Activated CD8-positive, alpha-beta T cell treated with anti-CD3 and anti-CD28 coated beads for 36 hours (primary cell): ENCODE measurements at regions of chr21 and their contacts with region 1.

Region 1: DNA sequence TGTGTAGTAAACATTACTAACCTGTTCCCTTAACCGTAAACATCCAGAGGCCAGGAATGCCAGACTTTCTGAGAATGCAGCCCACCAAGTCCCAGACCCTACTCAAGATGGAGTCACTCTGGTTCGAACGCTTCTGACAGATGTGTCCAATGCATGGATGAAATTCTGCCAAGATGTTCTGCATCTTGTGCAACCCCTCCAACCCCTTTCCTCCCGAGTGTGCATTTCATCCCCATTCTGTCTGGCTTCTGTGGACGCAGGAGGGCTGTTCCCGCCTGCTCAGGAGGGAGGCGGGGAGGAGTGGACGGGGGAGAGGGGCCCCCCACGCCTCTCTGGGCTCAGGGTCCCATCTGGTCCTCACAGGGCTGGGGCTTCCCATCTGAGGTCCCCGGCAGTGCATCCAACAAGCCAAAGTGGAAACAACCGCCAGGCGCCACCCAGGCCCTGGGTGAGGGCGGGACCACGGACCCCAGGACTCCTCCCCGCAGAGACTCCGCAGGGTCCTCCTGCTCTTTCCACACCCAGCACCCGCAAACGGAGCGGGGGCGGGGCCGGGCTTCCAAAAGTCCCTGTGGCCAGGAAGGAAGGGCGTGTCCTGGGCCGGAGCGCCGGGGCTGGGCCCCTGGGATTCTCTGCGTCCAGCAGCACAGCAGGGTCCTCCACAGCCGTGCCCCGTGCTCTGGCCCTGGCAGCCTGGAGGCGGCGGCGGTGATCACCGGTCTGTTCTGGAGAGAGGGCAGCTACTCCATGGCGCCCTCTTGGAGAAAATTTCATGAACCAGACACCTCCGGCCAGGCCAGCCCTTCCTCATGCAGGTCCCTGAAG is 27.7 kb upstream of the SUMO3 start:
- DNase-seq: peak; percentile 75
- ATAC-seq: peak; percentile 87
- H3K4me3 Mint-ChIP-seq: peak overlapping the region; percentile 71
- H3K27ac Mint-ChIP-seq: peak overlapping the region; percentile 53
- H3K4me1 Mint-ChIP-seq: peaks cover 19% of the 10 kb centered on the region
- H3K27me3 Mint-ChIP-seq: no peaks in the 10 kb centered on the region
- CTCF ChIP-seq: peak; percentile 75

Region 2: GRCh38 chr21:44873356-44874239 is 28.0 kb after region 1 on chr21 and contains the start of gene PTTG1IP:
- CTCF ChIA-PET with region 1: interaction called, 12 read pairs
- POLR2A ChIA-PET with region 1: no interaction called
- intact Hi-C with region 1: no loop called
- DNase-seq: peak; percentile 99
- ATAC-seq: peak; percentile 89
- H3K4me3 Mint-ChIP-seq: peak within 1 kb of the TSS; percentile 84
- H3K27ac Mint-ChIP-seq: peak within 1 kb of the TSS; percentile 83
- H3K4me1 Mint-ChIP-seq: peaks cover 40% of the 10 kb centered on the region
- H3K27me3 Mint-ChIP-seq: no peaks in the 10 kb centered on the region
- CTCF ChIP-seq: no peak
- total RNA-seq, gene PTTG1IP: 60.7 to 61.8 TPM

Region 3: DNA sequence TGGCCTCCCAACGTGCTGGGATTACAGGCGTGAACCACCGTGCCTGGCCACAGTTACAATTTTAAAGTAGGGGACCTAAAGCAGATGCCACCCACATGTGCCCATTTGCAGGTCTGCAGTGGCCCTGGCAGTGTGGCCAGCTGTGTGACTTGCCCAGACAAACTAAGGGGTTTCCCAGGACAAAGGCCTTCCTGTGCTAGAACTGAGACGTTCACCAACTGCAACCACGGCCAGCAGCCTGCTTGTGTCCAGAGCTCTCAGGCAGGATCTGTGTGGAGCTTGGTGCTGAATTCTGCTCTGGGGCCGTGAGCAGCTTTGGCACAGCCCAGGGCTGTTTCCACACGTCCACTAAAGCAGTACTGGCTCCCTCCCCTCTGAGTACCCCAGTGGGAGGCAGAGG is 38.5 kb after region 1 on chr21:
- CTCF ChIA-PET with region 1: no interaction called
- POLR2A ChIA-PET with region 1: no interaction called
- intact Hi-C with region 1: no loop called
- DNase-seq: no peak
- ATAC-seq: peak; percentile 7
- H3K4me3 Mint-ChIP-seq: no peak overlapping the region
- H3K27ac Mint-ChIP-seq: peak overlapping the region; percentile 16
- H3K4me1 Mint-ChIP-seq: peaks cover 21% of the 10 kb centered on the region
- H3K27me3 Mint-ChIP-seq: no peaks in the 10 kb centered on the region
- CTCF ChIP-seq: no peak

Region 4: DNA sequence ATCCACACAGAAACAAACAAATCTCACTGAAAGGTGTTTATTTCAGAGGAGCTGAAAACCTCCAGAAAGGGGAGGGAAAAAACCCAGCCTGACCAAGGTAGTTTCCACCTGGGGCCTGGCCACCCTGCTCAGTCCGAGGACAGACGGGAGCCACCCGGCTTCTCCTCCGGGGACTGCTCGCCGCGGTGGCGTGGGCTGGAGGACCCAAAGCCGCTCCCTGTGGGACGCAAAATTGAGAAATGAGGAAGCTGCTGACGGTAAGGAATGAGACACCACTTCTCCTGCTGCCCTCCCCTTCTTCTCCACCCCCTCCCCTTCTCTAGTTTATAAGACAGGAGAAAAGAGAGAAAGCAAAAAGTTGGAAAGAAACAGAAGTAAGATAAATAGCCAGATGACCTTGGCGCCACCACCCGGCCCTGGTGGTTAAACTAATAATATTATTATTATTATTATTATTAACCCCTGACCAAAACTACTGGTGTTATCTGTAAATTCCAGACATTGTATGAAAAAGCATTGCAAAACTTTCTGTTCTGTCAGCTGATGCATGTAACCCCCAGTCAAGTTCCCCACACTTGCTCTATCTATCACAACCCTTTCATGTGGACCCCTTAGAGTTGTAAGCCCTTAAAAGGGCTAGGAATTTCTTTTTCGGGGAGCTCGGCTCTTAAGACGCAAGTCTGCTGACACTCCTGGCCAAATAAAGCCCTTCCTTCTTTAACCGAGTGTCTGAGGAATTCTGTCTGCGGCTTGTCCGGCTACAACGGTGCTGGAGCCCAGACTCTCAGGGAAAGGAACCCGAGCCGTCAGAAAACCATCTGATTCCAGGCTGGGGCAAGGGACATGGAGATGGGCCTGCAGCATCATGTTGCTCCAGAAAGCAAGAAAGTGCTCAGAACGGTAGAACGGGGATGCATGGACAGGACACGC is 62.6 kb after region 1 on chr21:
- CTCF ChIA-PET with region 1: no interaction called
- POLR2A ChIA-PET with region 1: no interaction called
- intact Hi-C with region 1: no loop called
- DNase-seq: no peak
- ATAC-seq: no peak
- H3K4me3 Mint-ChIP-seq: no peak overlapping the region
- H3K27ac Mint-ChIP-seq: peak overlapping the region; percentile 38
- H3K4me1 Mint-ChIP-seq: peaks cover 57% of the 10 kb centered on the region
- H3K27me3 Mint-ChIP-seq: no peaks in the 10 kb centered on the region
- CTCF ChIP-seq: no peak